ENCODE measurements at regions of chr9 and their contacts with region 1.

Region 1: DNA sequence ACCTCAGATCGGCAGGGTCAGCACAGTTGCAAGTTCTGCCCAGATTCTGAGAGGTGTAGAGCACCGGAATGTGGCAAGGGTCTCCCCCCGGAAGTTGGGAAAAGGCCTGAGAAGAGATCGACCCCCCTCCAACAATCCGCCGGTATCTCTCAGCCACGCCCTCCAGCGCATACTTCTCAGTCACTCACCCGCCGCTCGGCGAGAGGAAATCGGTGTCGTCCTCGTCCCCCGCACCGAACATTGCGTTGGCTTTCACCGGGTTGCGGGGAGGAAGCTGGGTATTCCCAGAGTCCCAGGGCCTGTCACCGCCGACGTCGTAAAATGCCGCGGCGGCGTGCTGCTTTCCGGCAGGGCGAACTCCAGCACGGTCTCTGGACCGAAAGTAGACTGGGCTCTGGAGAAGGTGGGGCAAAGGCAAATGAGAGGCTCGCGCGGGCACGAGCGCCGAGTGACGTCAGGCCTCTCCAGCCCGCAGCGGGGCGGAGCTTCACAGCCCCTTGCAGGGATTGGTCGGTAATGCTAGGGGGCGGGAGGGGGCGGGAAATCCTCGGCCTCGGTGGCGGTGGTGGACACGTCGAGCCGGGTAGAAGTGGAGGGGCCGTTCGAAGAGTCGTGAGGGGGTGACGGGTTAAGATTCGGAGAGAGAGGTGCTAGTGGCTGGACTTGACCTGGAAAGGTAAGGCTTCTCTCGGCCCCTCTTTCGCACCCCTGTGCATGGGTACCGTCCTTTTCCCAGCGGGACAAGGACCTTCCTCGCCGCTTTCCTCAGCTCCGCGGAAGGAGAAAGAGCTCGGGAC is at the starts of genes FKBP15 and SLC31A1:
- DNase-seq: peak; percentile 95
- ATAC-seq: peak; percentile 98
- H3K4me3 Mint-ChIP-seq: peak within 1 kb of the TSS; percentile 86
- H3K27ac Mint-ChIP-seq: peak within 1 kb of the TSS; percentile 71
- H3K4me1 Mint-ChIP-seq: peaks cover 36% of the 10 kb centered on the region
- H3K27me3 Mint-ChIP-seq: no peaks in the 10 kb centered on the region
- total RNA-seq, gene FKBP15: 37.4 to 40.7 TPM
- total RNA-seq, gene SLC31A1: 8.8 to 9.3 TPM

Region 2: DNA sequence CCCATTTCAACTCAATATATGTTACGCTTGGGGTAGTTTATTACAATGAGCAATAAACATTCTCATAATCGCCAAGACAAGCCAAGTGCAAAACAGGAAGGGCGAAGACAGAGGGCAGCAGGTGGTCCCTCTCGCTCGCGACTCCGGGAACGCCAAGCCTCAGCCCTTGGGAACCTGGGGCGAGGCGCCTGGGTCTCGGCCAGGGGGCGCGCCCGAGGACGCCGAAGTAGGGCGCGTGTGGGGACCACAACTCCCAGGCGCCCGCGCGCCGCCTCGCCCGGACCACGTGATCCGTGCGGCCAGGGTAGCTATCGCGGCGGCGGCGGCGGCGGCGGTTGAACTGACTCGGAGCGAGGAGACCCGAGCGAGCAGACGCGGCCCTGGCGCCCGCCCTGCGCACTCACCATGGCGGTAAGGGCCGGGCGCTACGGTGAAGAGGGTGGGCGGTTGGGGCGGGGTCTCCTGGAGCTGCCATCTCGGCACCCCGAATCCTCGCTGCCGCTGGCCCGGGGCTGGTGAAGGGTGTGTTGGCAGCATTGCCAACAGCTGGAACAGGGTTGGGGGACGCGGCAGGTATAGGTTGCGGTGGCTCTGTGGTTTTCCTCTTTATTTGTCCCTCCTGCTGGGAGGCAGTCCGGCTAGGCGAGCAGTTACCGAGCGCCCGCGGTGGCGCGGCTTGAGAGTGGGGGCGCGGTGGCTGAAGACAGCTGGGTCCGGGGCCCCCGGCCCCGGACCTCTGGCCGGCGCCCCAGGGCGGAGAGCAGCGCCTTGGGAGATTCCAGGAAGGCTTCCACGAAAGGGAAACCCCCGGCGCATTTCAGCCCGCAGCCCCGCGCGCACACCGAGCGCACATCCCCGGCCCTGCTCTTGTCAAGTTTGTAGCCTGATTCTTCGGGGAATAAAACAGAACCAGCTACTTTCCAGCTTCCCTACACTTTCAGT is 70.3 kb before region 1 on chr9 and contains the start of gene SLC31A2:
- POLR2A ChIA-PET with region 1: interaction called, 12 read pairs
- DNase-seq: peak; percentile 94
- ATAC-seq: peak; percentile 95
- H3K4me3 Mint-ChIP-seq: peak within 1 kb of the TSS; percentile 76
- H3K27ac Mint-ChIP-seq: no peak within 1 kb of the TSS
- H3K4me1 Mint-ChIP-seq: peaks cover 26% of the 10 kb centered on the region
- H3K27me3 Mint-ChIP-seq: peaks cover 9% of the 10 kb centered on the region
- total RNA-seq, gene SLC31A2: 3.4 to 4.7 TPM

Region 3: DNA sequence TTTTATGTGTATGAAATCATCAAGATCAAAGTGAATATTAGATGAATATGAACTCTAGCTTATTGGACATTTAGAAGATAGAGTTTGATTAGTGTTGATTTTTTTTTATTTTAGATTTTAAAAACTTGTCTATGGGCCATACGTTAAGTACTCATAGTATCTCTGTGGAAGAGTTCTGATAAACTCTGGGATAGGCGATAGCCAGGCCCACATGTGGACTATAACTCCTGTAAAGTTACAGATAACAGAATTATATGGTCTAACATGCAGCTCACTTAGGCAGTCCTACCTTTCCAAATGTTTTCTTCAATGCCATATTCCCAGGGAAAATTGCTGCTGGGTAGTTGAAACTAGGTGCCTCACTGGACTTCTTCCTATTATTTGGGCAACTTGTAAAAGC is 10.5 kb after region 1 on chr9:
- POLR2A ChIA-PET with region 1: interaction called, 11 read pairs
- DNase-seq: no peak
- ATAC-seq: no peak
- H3K4me3 Mint-ChIP-seq: no peak overlapping the region
- H3K27ac Mint-ChIP-seq: no peak overlapping the region
- H3K4me1 Mint-ChIP-seq: peaks cover 15% of the 10 kb centered on the region
- H3K27me3 Mint-ChIP-seq: no peaks in the 10 kb centered on the region

Region 4: DNA sequence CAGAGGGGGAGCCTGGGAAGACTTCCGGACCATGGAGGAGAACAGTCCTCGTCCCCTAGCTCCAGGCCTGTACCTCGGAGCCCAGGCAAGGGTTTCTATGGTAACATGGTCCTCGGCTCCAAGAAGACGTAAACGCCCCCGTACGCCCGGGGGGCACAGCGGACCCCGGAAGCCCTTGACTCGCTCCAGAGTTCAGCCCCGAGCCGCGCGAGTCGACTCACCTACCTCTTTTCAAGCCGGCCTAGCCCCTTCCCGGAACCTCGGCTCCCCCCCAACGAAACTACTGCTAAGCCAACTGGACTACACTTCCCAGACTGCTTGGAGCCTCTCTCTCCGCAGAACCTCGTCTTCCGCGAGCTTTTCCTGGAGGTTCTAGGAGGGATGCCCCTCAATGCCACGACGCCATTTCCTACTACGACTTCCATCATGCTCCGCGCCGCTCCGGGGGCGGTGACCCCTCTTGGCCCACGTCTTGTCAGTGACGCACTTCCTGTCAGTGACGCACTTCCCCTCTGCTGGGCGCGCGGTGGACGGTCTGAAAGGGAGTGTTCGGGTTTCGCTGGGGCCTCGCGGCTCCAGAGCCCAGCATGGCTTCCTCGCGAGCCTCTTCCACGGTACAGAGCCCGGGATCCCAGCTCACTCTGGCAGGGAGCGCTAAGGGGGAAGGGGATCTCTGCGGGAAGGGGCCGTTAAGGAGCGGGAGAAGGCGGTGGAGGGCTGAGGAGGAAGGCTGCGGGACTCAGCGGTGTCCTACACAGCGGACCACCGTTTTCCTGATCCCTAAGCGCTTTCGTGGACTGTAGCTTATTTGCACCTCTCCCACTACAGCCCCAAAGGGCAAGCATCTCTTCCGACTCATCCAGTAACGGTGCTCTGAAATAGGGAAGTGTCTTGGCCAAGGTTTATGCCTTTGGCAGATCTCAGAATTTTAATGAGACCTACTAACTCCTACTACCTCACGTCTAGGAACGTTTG is 54.2 kb after region 1 on chr9 and contains the starts of genes CDC26 and PRPF4:
- POLR2A ChIA-PET with region 1: interaction called, 12 read pairs
- DNase-seq: peak; percentile 94
- ATAC-seq: peak; percentile 94
- H3K4me3 Mint-ChIP-seq: no peak within 1 kb of the TSS
- H3K27ac Mint-ChIP-seq: no peak within 1 kb of the TSS
- H3K4me1 Mint-ChIP-seq: peaks cover 22% of the 10 kb centered on the region
- H3K27me3 Mint-ChIP-seq: no peaks in the 10 kb centered on the region
- total RNA-seq, gene CDC26: 27.5 to 28.9 TPM
- total RNA-seq, gene PRPF4: 31.1 to 31.8 TPM

Measured in activated naive CD8-positive, alpha-beta T cell treated with anti-CD3 and anti-CD28 coated beads, Interleukin-2, amount 10 ng/mL, durations not matched to agents 7 days and 5 days (primary cell).